Activated CD4-positive, alpha-beta T cell treated with anti-CD3 and anti-CD28 coated beads for 36 hours (primary cell): ENCODE measurements at regions of chr9 and their contacts with region 1.

Region 1: GRCh38 chr9:78439190-78439865 is 142.4 kb downstream of the PSAT1 start:
- DNase-seq: peak; percentile 79
- ATAC-seq: peak; percentile 33
- H3K4me3 Mint-ChIP-seq: no peak overlapping the region
- H3K27ac Mint-ChIP-seq: no peak overlapping the region
- H3K4me1 Mint-ChIP-seq: peaks cover 6% of the 10 kb centered on the region
- H3K27me3 Mint-ChIP-seq: peaks cover 29% of the 10 kb centered on the region

Region 2: GRCh38 chr9:78468231-78468630 is 28.9 kb after region 1 on chr9:
- CTCF ChIA-PET with region 1: interaction called, 10 read pairs
- POLR2A ChIA-PET with region 1: no interaction called
- intact Hi-C with region 1: no loop called
- DNase-seq: no peak
- ATAC-seq: no peak
- H3K4me3 Mint-ChIP-seq: no peak overlapping the region
- H3K27ac Mint-ChIP-seq: no peak overlapping the region
- H3K4me1 Mint-ChIP-seq: no peaks in the 10 kb centered on the region
- H3K27me3 Mint-ChIP-seq: peaks cover 8% of the 10 kb centered on the region

Region 3: DNA sequence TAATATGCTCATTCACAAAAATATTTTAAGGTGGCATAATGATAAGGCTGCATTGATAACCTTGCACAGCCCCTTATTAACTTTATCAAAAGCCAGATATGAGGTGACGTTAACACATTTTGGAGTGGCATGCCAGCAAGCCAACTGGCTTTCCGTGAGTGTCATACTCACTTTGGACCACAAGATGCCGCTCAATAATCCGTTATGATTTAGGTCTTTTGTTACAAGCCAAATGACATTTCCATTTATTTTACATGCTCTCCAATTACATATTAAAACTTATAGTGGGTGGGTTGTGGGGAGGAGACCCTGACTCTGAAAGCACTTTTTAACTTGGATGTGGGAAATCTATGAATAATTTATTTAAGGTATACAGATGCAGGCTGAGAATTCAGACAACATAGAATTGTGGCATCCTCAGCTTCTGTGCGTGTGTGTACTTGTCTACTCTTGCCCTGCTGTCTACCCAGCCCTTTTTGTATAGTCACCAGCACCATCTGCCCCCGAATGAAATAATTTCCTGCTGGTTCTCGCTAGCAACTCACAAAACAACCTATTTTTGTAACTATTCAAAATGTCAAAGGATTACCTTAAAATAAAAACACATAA is 162.7 kb after region 1 on chr9:
- CTCF ChIA-PET with region 1: interaction called, 3 read pairs
- POLR2A ChIA-PET with region 1: no interaction called
- intact Hi-C with region 1: loop called in 1 of 2 experiments (anchors 2 kb)
- DNase-seq: peak; percentile 30
- ATAC-seq: no peak
- H3K4me3 Mint-ChIP-seq: no peak overlapping the region
- H3K27ac Mint-ChIP-seq: no peak overlapping the region
- H3K4me1 Mint-ChIP-seq: no peaks in the 10 kb centered on the region
- H3K27me3 Mint-ChIP-seq: peaks cover 12% of the 10 kb centered on the region

Region 4: GRCh38 chr9:78707481-78707991 is 268.2 kb after region 1 on chr9:
- CTCF ChIA-PET with region 1: no interaction called
- POLR2A ChIA-PET with region 1: no interaction called
- intact Hi-C with region 1: loop called in 1 of 2 experiments (anchors 10 kb)
- DNase-seq: no peak
- ATAC-seq: no peak
- H3K4me3 Mint-ChIP-seq: no peak overlapping the region
- H3K27ac Mint-ChIP-seq: no peak overlapping the region
- H3K4me1 Mint-ChIP-seq: no peaks in the 10 kb centered on the region
- H3K27me3 Mint-ChIP-seq: peaks cover 3% of the 10 kb centered on the region

Region 5: DNA sequence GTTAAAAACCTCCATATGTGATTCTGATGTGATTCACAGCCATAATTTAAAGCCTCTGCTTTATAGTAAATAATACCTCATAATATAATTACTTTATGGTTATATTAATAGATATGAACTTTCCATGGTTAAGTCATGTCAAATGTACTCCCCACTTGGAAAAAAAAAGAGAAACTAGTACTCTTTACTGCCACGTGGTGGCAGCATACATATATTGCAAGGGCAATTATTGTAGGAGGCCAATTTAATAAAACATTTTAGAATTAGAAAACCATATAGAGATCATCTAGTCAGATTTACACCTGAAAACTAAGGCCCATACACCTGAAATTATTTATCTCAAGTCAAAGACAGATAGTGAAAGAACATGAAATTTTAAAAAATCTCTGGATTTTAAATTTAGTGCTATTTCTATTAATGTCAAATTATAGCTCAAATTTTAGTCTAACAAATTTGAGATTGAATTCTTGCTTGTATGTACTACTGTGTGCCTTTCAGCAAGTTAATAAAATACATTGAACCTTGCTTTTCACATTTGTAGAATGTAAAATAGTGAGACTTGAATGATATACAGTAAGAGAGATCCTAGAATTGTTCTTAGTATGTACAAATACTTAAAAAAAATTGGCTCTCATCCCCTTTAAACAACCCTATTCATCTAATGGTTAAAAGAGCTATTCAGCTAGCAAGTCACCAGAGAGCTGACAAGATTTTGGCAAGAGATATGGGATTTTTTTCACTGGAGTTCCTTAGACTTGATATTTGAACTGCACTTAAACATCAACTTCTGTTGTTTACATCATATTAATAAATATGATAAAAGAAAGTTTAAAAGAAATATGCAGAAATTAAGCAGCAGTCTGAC is 1736.2 kb after region 1 on chr9:
- CTCF ChIA-PET with region 1: no interaction called
- POLR2A ChIA-PET with region 1: no interaction called
- intact Hi-C with region 1: loop called in 1 of 2 experiments (anchors 5 kb)
- DNase-seq: peak; percentile 28
- ATAC-seq: no peak
- H3K4me3 Mint-ChIP-seq: no peak overlapping the region
- H3K27ac Mint-ChIP-seq: no peak overlapping the region
- H3K4me1 Mint-ChIP-seq: no peaks in the 10 kb centered on the region
- H3K27me3 Mint-ChIP-seq: peaks cover 3% of the 10 kb centered on the region